Activated CD4-positive, alpha-beta memory T cell treated with anti-CD3 and anti-CD28 coated beads for 36 hours (primary cell): ENCODE measurements at regions of chr14 and their contacts with region 1.

Region 1: GRCh38 chr14:93970549-93970946 is 5.8 kb downstream of the ASB2 start:
- DNase-seq: peak; percentile 82
- H3K4me3 Mint-ChIP-seq: peak overlapping the region; percentile 74
- H3K27ac Mint-ChIP-seq: peak overlapping the region; percentile 96
- H3K4me1 Mint-ChIP-seq: peaks cover 78% of the 10 kb centered on the region
- H3K27me3 Mint-ChIP-seq: no peaks in the 10 kb centered on the region

Region 2: GRCh38 chr14:93691042-93691780 is 279.3 kb before region 1 on chr14:
- CTCF ChIA-PET with region 1: no interaction called
- POLR2A ChIA-PET with region 1: no interaction called
- intact Hi-C with region 1: no loop called
- DNase-seq: no peak
- H3K4me3 Mint-ChIP-seq: no peak overlapping the region
- H3K27ac Mint-ChIP-seq: no peak overlapping the region
- H3K4me1 Mint-ChIP-seq: no peaks in the 10 kb centered on the region
- H3K27me3 Mint-ChIP-seq: peaks cover 24% of the 10 kb centered on the region

Region 3: GRCh38 chr14:93946104-93946503 is 24.4 kb before region 1 on chr14:
- CTCF ChIA-PET with region 1: interaction called, 425 read pairs
- POLR2A ChIA-PET with region 1: interaction called, 447 read pairs
- intact Hi-C with region 1: no loop called
- DNase-seq: no peak
- H3K4me3 Mint-ChIP-seq: no peak overlapping the region
- H3K27ac Mint-ChIP-seq: no peak overlapping the region
- H3K4me1 Mint-ChIP-seq: peaks cover 9% of the 10 kb centered on the region
- H3K27me3 Mint-ChIP-seq: no peaks in the 10 kb centered on the region

Region 4: GRCh38 chr14:93989939-93990338 is 19.4 kb after region 1 on chr14:
- CTCF ChIA-PET with region 1: interaction called, 11 read pairs
- POLR2A ChIA-PET with region 1: interaction called, 5 read pairs
- intact Hi-C with region 1: no loop called
- DNase-seq: no peak
- H3K4me3 Mint-ChIP-seq: no peak overlapping the region
- H3K27ac Mint-ChIP-seq: no peak overlapping the region
- H3K4me1 Mint-ChIP-seq: peaks cover 14% of the 10 kb centered on the region
- H3K27me3 Mint-ChIP-seq: no peaks in the 10 kb centered on the region

Region 5: DNA sequence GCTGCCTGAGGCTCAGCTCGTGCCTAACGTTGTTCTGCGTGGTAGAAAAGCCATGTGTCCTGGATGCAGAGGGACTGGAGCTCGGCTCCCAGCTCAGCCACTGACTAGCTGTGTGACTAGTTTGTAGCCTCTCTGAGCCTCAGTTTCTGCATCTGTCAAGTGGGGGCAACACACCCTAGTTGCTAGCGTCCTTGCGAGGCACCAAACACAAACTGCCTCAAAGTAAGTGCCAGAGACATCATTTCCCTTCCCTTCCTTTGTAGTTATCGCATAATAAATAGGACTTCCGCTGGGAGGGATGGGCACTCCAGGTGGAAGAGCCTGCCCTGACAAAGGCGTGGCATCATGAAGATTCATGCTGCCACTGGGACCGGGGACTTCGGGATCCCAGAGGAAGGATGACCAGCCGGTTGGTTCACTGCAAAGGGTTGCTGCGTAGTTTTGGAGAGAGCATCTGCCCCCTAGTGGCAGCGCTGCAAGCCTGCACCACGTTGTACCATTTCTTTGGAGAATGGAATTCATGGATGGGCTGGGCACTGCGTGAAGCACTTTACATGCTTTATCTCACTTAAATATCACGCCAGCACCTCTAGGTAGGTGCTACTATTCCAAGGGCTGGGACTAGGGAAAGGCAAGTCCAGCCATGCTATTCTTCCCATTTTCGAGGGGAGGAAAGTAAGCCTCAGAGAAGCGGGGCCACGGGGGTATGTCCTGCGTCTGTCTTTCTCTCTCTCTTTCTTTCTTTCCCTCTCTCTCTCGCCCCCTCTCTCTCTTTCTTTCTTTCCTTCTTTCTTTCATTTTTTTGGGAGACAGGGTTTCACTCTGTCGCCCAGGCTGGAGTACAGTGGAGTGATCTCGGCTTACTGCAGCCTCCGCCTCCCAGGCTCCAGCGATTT is 31.2 kb after region 1 on chr14:
- CTCF ChIA-PET with region 1: interaction called, 47 read pairs
- POLR2A ChIA-PET with region 1: interaction called, 12 read pairs
- intact Hi-C with region 1: loop called (anchors 1 kb)
- DNase-seq: peak; percentile 72
- H3K4me3 Mint-ChIP-seq: no peak overlapping the region
- H3K27ac Mint-ChIP-seq: peak overlapping the region; percentile 50
- H3K4me1 Mint-ChIP-seq: peaks cover 29% of the 10 kb centered on the region
- H3K27me3 Mint-ChIP-seq: no peaks in the 10 kb centered on the region

Region 6: GRCh38 chr14:94021001-94021400 is 50.5 kb after region 1 on chr14:
- CTCF ChIA-PET with region 1: interaction called, 10 read pairs
- POLR2A ChIA-PET with region 1: interaction called, 3 read pairs
- intact Hi-C with region 1: no loop called
- DNase-seq: peak; percentile 36
- H3K4me3 Mint-ChIP-seq: no peak overlapping the region
- H3K27ac Mint-ChIP-seq: peak overlapping the region; percentile 70
- H3K4me1 Mint-ChIP-seq: peaks cover 31% of the 10 kb centered on the region
- H3K27me3 Mint-ChIP-seq: no peaks in the 10 kb centered on the region

Region 7: DNA sequence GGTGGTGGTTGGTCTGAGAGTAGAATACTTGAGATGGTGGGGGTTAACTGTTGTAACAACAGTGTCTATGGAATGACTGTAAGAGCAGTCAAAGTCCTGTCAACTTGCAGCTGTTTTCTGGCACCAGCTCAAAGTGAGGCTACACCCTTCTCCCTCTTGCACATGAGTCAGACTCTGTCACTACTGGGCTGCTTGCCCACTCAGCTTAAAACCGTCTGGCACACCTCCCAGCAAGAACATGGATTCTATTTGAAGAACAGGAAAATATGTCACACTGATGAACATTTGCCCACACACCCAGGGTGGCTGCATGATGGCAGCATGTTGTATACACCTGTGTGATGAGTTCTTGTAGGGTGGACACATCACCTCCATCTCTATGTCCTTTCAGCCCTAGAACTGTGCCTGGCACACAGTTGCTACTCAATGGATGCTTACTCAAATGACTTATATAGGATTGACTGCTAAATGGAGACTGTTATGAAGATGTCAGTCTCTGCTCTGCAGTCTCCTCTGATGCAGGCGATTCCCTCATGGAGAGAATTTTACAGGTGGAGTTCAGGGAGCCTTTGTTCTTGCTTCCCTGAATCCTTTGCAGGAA is 371.9 kb after region 1 on chr14:
- CTCF ChIA-PET with region 1: no interaction called
- POLR2A ChIA-PET with region 1: no interaction called
- intact Hi-C with region 1: loop called (anchors 5 kb)
- DNase-seq: peak; percentile 80
- H3K4me3 Mint-ChIP-seq: no peak overlapping the region
- H3K27ac Mint-ChIP-seq: peak overlapping the region; percentile 80
- H3K4me1 Mint-ChIP-seq: peaks cover 78% of the 10 kb centered on the region
- H3K27me3 Mint-ChIP-seq: no peaks in the 10 kb centered on the region